Caco-2 (cell line): ENCODE measurements at regions of chr9 and their contacts with region 1.

Region 1: DNA sequence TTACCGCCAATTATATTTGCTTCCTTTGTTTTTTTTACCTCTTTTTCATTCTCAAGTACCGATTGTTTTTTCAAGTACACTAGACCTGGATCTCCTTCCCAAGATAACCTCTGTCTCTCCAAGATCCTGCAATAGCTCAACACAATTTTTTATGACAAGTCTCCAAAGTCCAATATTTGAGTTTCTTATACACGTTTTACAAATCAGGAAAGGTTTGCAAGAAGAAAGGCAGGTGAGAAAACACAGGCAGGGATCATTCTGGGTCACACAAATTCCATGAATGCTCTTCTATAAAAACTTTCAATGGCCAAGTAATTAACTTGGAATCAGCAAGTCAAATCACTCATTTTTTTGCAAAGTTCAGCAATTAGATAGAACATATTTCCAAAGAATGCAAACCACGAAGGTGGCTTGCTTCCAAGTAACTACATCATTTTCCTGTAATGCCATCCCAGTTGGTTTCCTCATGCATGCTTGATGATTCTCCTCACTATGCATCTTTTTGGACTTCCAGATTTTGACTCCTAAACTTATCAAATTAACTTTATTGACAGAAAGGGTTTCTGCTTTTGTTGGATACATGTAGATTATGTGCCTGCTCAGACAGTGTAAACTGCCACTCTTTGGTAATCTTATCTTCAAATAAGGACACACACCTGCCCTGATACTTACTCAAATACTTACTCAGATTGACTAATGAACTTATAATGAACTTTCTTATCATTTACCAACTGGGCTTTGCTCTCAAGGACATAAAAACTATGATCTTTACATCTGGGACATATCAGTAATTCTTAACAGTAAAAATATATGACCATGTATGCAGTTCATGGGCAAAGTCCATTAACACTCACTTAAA is 24.7 kb upstream of the IFNE start:
- DNase-seq: peak; percentile 35 to 39
- H3K4me3 ChIP-seq: no peak overlapping the region
- H3K4me3 Mint-ChIP-seq: peak overlapping the region; percentile 44
- H3K27ac Mint-ChIP-seq: no peak overlapping the region
- H3K4me1 ChIP-seq: peaks cover 50% of the 10 kb centered on the region
- H3K4me1 Mint-ChIP-seq: peaks cover 25% of the 10 kb centered on the region
- H3K27me3 ChIP-seq: no peaks in the 10 kb centered on the region
- H3K27me3 Mint-ChIP-seq: no peaks in the 10 kb centered on the region
- CTCF ChIP-seq: no peak

Region 2: GRCh38 chr9:21549251-21549765 is 42.5 kb after region 1 on chr9:
- CTCF ChIA-PET with region 1: no interaction called
- POLR2A ChIA-PET with region 1: no interaction called
- intact Hi-C with region 1: no loop called
- DNase-seq: no peak
- H3K4me3 ChIP-seq: no peak overlapping the region
- H3K4me3 Mint-ChIP-seq: no peak overlapping the region
- H3K27ac Mint-ChIP-seq: no peak overlapping the region
- H3K4me1 ChIP-seq: peaks cover 14% of the 10 kb centered on the region
- H3K4me1 Mint-ChIP-seq: peaks cover 9% of the 10 kb centered on the region
- H3K27me3 ChIP-seq: no peaks in the 10 kb centered on the region
- H3K27me3 Mint-ChIP-seq: no peaks in the 10 kb centered on the region
- CTCF ChIP-seq: no peak

Region 3: DNA sequence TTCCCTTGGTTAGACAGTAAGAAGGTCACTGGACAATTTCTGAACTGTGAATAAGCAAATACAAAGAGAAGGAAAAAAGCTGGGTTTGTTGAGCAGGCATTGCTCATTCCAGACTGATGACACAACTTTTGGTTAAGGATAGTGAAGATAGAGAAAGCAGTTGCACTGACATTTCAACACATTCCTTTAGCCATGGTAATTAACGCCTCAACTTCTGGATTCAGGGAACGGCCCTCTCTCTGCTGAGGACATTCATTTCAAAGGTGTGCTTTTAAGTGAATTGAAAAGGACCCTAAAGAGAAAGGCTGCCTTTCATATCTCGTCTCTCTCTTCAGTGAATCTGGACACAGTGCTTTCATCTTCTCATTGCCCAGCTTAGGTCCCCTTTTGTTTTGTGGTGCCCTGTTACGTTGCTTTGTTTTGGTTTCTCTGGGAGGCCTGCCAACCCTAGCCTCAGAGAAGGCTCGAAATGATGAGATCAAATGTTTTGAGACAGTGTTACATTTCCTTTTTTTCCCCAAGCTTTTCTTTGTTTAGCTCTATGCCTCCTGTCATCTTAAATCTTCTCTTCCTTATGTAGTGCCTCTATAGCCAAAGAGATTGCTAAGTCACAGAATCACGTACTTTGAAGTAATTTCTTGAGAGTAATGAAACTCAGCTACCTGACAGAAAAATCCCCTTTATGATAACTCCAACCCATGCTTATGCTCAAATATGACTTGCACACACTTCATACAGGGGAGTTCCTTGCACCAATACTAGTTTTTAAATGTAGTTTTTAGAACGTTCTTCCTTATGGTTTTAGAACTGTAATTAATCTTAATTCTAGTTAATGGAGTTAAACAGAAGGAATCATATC is 69.7 kb after region 1 on chr9:
- CTCF ChIA-PET with region 1: no interaction called
- POLR2A ChIA-PET with region 1: no interaction called
- intact Hi-C with region 1: loop called (anchors 1 kb)
- DNase-seq: peak in 1 of 2 experiments; percentile 34
- H3K4me3 ChIP-seq: no peak overlapping the region
- H3K4me3 Mint-ChIP-seq: peak overlapping the region; percentile 69
- H3K27ac Mint-ChIP-seq: peak overlapping the region; percentile 93
- H3K4me1 ChIP-seq: peaks cover 33% of the 10 kb centered on the region
- H3K4me1 Mint-ChIP-seq: peaks cover 16% of the 10 kb centered on the region
- H3K27me3 ChIP-seq: no peaks in the 10 kb centered on the region
- H3K27me3 Mint-ChIP-seq: no peaks in the 10 kb centered on the region
- CTCF ChIP-seq: no peak